Lower leg skin (tissue), 4 donors: ENCODE measurements at regions of chr4 and their contacts with region 1.

Region 1: DNA sequence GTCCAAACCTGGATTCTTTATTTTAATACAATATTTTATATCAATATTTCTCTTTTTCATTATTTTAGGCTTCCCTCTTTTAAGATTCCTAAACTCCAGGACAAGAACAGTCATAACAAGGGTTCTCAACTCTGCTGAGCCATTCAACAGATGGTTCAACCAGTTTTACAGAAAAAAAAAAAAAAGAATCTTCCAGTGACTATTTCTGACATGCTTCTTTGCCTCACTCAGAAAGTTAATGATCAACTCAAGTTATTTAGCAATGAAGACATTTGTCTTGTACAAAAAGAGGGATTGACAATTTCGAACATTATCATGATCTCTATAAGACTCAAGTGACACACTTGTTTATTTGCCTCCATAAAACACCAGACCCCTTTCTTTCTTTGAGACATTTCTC is 282.6 kb upstream of the GRID2 start:
- DNase-seq: no peak
- H3K4me3 ChIP-seq: no peak overlapping the region
- CTCF ChIP-seq: no peak
- POLR2A ChIP-seq: no peak

Region 2: GRCh38 chr4:92045718-92046117 is 24.5 kb after region 1 on chr4:
- intact Hi-C with region 1: loop called (anchors 1 kb)
- DNase-seq: no peak
- H3K4me3 ChIP-seq: no peak overlapping the region
- CTCF ChIP-seq: no peak
- POLR2A ChIP-seq: no peak